Naive thymus-derived CD8-positive, alpha-beta T cell (primary cell): ENCODE measurements at regions of chr15 and their contacts with region 1.

Region 1: GRCh38 chr15:92881802-92882696 is 18.1 kb upstream of the CHD2 start:
- DNase-seq: peak; percentile 97 to 99 (median 98)
- ATAC-seq: peak; percentile 83 to 86
- H3K4me3 Mint-ChIP-seq: peak overlapping the region; percentile 81 to 96 (median 90)
- H3K27ac Mint-ChIP-seq: peak overlapping the region; percentile 96 to 100 (median 99)
- H3K4me1 Mint-ChIP-seq: peaks cover 40 to 72% (median 63%) of the 10 kb centered on the region in 4 donors
- H3K27me3 Mint-ChIP-seq: no peaks in the 10 kb centered on the region

Region 2: GRCh38 chr15:92797168-92797951 is 84.7 kb before region 1 on chr15:
- POLR2A ChIA-PET with region 1: interaction called, 681 read pairs
- DNase-seq: peak in 7 of 10 donors; percentile 12 to 82 (median 67)
- ATAC-seq: peak; percentile 89 to 91
- H3K4me3 Mint-ChIP-seq: peak overlapping the region in 1 of 10 donors; percentile 22
- H3K27ac Mint-ChIP-seq: peak overlapping the region; percentile 25 to 90 (median 76)
- H3K4me1 Mint-ChIP-seq: peaks cover 4 to 8% (median 7%) of the 10 kb centered on the region in 4 donors
- H3K27me3 Mint-ChIP-seq: no peaks in the 10 kb centered on the region

Region 3: GRCh38 chr15:92820236-92821021 is 61.6 kb before region 1 on chr15:
- POLR2A ChIA-PET with region 1: interaction called, 189 read pairs
- DNase-seq: peak; percentile 78 to 93 (median 83)
- ATAC-seq: peak; percentile 79 to 91
- H3K4me3 Mint-ChIP-seq: peak overlapping the region; percentile 86 to 95 (median 89)
- H3K27ac Mint-ChIP-seq: peak overlapping the region; percentile 85 to 98 (median 97)
- H3K4me1 Mint-ChIP-seq: peaks cover 16 to 60% (median 49%) of the 10 kb centered on the region in 4 donors
- H3K27me3 Mint-ChIP-seq: no peaks in the 10 kb centered on the region

Region 4: GRCh38 chr15:92845126-92845508 is 36.9 kb before region 1 on chr15:
- POLR2A ChIA-PET with region 1: interaction called, 202 read pairs
- DNase-seq: peak in 4 of 10 donors; percentile 13 to 78 (median 71)
- ATAC-seq: peak; percentile 38 to 43
- H3K4me3 Mint-ChIP-seq: peak overlapping the region; percentile 68 to 92 (median 88)
- H3K27ac Mint-ChIP-seq: peak overlapping the region; percentile 90 to 100 (median 97)
- H3K4me1 Mint-ChIP-seq: peaks cover 32 to 86% (median 74%) of the 10 kb centered on the region in 4 donors
- H3K27me3 Mint-ChIP-seq: no peaks in the 10 kb centered on the region

Region 5: GRCh38 chr15:92868992-92869988 is 12.8 kb before region 1 on chr15:
- POLR2A ChIA-PET with region 1: interaction called, 53 read pairs
- DNase-seq: no peak
- ATAC-seq: no peak
- H3K4me3 Mint-ChIP-seq: no peak overlapping the region
- H3K27ac Mint-ChIP-seq: peak overlapping the region in 1 of 10 donors; percentile 32
- H3K4me1 Mint-ChIP-seq: peaks cover 3 to 15% (median 5%) of the 10 kb centered on the region in 4 donors
- H3K27me3 Mint-ChIP-seq: no peaks in the 10 kb centered on the region

Region 6: GRCh38 chr15:92917606-92918407 is 35.8 kb after region 1 on chr15:
- POLR2A ChIA-PET with region 1: interaction called, 183 read pairs
- DNase-seq: peak; percentile 75 to 95 (median 90)
- ATAC-seq: peak; percentile 16 to 33
- H3K4me3 Mint-ChIP-seq: peak overlapping the region; percentile 26 to 92 (median 66)
- H3K27ac Mint-ChIP-seq: peak overlapping the region; percentile 90 to 100 (median 98)
- H3K4me1 Mint-ChIP-seq: peaks cover 43 to 93% (median 83%) of the 10 kb centered on the region in 4 donors
- H3K27me3 Mint-ChIP-seq: no peaks in the 10 kb centered on the region

Region 7: GRCh38 chr15:92989470-92989869 is 107.4 kb after region 1 on chr15:
- POLR2A ChIA-PET with region 1: no interaction called
- DNase-seq: no peak
- ATAC-seq: no peak
- H3K4me3 Mint-ChIP-seq: no peak overlapping the region
- H3K27ac Mint-ChIP-seq: peak overlapping the region in 9 of 10 donors; percentile 7 to 82 (median 55)
- H3K4me1 Mint-ChIP-seq: peaks cover 10 to 24% (median 18%) of the 10 kb centered on the region in 4 donors
- H3K27me3 Mint-ChIP-seq: no peaks in the 10 kb centered on the region